PC-9 (cell line): ENCODE measurements at regions of chr2 and their contacts with region 1.

Region 1: GRCh38 chr2:216606551-216607276 is 26.5 kb upstream of the IGFBP2 start:
- DNase-seq: no peak
- H3K4me3 ChIP-seq: no peak overlapping the region
- H3K27ac ChIP-seq: no peak overlapping the region
- H3K4me1 ChIP-seq: peaks cover 47% of the 10 kb centered on the region
- H3K27me3 ChIP-seq: no peaks in the 10 kb centered on the region
- CTCF ChIP-seq: no peak

Region 2: GRCh38 chr2:215505044-215505786 is 1101.5 kb before region 1 on chr2:
- CTCF ChIA-PET with region 1: no interaction called
- POLR2A ChIA-PET with region 1: no interaction called
- intact Hi-C with region 1: no loop called
- DNase-seq: no peak
- H3K4me3 ChIP-seq: no peak overlapping the region
- H3K27ac ChIP-seq: no peak overlapping the region
- H3K4me1 ChIP-seq: no peaks in the 10 kb centered on the region
- H3K27me3 ChIP-seq: no peaks in the 10 kb centered on the region
- CTCF ChIP-seq: no peak

Region 3: DNA sequence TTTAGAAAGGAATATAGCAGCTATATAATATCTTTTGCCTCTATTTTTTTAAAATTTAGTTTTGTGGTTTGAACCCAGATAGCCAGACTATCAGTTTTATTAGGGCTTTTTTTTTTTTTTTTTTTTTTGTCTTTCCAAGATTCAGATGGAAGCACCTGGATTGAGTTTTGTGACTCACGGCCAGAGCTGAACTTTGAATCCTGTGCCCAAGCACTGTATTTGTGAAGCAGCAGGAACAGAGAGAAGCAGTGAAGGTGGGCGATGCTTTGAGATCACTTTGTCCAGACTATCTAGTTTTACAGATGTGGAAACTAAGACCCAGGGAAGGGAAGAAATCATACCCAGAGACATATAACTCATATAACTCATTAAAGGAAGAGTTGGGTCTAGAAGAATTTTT is 74.2 kb before region 1 on chr2:
- CTCF ChIA-PET with region 1: interaction called, 14 read pairs
- POLR2A ChIA-PET with region 1: no interaction called
- intact Hi-C with region 1: no loop called
- DNase-seq: no peak
- H3K4me3 ChIP-seq: no peak overlapping the region
- H3K27ac ChIP-seq: no peak overlapping the region
- H3K4me1 ChIP-seq: peaks cover 24% of the 10 kb centered on the region
- H3K27me3 ChIP-seq: no peaks in the 10 kb centered on the region
- CTCF ChIP-seq: no peak

Region 4: DNA sequence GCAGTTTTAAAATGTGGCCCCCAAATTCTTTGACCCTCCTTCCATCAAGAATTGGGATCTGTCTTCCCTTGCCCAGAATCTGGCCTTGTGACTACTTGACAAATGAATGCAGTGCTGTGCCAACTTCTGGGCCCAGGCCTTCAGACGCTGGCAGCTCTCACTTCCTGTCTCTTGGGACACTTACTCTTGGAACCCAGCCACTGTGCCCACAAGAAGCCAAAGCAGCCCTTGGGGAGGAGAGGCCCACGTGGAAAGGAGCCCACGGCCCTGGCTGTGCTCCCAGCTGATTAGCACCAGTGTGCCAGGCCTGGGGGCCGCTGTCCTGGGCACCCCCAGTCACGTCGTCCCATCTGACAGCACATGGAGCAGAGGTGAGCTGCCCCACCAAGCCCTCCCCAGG is 51.4 kb before region 1 on chr2:
- CTCF ChIA-PET with region 1: no interaction called
- POLR2A ChIA-PET with region 1: no interaction called
- intact Hi-C with region 1: no loop called
- DNase-seq: peak in 1 of 2 experiments; percentile 31
- H3K4me3 ChIP-seq: no peak overlapping the region
- H3K27ac ChIP-seq: no peak overlapping the region
- H3K4me1 ChIP-seq: no peaks in the 10 kb centered on the region
- H3K27me3 ChIP-seq: no peaks in the 10 kb centered on the region
- CTCF ChIP-seq: no peak

Region 5: GRCh38 chr2:216590780-216591179 is 15.9 kb before region 1 on chr2:
- CTCF ChIA-PET with region 1: no interaction called
- POLR2A ChIA-PET with region 1: no interaction called
- intact Hi-C with region 1: loop called (anchors 2 kb)
- DNase-seq: no peak
- H3K4me3 ChIP-seq: no peak overlapping the region
- H3K27ac ChIP-seq: no peak overlapping the region
- H3K4me1 ChIP-seq: 0 out of 2 replicates have a peak, but pooled peaks cover 7% of the 10 kb centered on the region
- H3K27me3 ChIP-seq: no peaks in the 10 kb centered on the region
- CTCF ChIP-seq: no peak